CD4-positive, alpha-beta memory T cell (primary cell): ENCODE measurements at regions of chr6 and their contacts with region 1.

Region 1: DNA sequence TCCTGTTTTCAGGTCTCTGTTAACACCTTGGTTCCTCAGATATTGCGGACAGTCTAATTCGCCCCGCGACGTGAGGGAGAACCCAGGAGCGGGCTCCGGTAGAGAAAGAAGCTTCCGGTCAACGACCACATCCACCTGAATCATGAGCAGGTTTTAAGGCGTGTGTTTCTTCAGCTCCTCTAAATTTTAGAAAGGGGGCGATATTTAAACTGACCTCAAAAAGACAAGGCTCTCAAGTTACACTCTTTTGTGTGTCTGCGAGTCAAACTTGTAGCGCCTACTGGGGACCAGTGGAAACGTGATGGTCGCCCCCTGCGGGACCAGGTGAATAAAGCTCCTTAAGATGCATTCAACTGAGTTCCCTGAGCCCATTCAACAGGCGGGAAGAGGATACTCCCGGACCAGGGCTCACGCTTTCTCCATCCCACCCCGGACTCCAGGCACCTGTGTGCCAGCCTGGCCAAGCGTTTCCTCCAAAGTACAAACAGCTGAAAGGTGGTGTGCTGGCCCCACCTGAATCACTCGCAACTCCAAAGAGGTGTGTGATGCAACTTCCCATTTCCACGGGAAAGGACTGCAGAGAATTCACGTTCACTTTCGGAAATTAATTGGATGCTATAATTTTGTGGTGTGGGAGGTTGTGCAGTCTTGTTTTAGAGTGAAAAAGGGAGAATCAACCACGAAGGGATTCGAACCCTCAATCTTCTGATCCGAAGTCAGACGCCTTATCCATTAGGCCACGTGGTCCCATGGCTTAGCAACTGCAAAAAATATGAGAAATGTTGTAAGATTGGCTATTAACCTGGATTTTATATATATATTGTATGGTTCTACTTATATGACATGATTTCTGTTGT is 17.0 kb downstream of the GPX5 start:
- DNase-seq: peak; percentile 56 to 66 (median 62)
- H3K4me3 ChIP-seq: peak overlapping the region; percentile 33 to 57
- H3K4me3 Mint-ChIP-seq: peak overlapping the region; percentile 82 to 91 (median 88)
- H3K27ac ChIP-seq: no peak overlapping the region
- H3K27ac Mint-ChIP-seq: peak overlapping the region; percentile 38 to 95 (median 72)
- H3K4me1 ChIP-seq: peaks cover 20% of the 10 kb centered on the region
- H3K4me1 Mint-ChIP-seq: peaks cover 14 to 36% (median 23%) of the 10 kb centered on the region in 4 donors
- H3K27me3 ChIP-seq: no peaks in the 10 kb centered on the region
- H3K27me3 Mint-ChIP-seq: peaks cover 39 to 40% of the 10 kb centered on the region in 2 donors

Region 2: GRCh38 chr6:28496099-28496779 is 46.4 kb before region 1 on chr6:
- CTCF ChIA-PET with region 1: interaction called, 4 read pairs
- POLR2A ChIA-PET with region 1: no interaction called
- intact Hi-C with region 1: loop called (anchors 5 kb)
- DNase-seq: peak in 2 of 5 donors; percentile 11 to 14
- H3K4me3 ChIP-seq: no peak overlapping the region
- H3K4me3 Mint-ChIP-seq: no peak overlapping the region
- H3K27ac ChIP-seq: no peak overlapping the region
- H3K27ac Mint-ChIP-seq: no peak overlapping the region
- H3K4me1 ChIP-seq: no peaks in the 10 kb centered on the region
- H3K4me1 Mint-ChIP-seq: no peaks in the 10 kb centered on the region
- H3K27me3 ChIP-seq: no peaks in the 10 kb centered on the region
- H3K27me3 Mint-ChIP-seq: peaks cover 14 to 26% of the 10 kb centered on the region in 2 donors

Region 3: DNA sequence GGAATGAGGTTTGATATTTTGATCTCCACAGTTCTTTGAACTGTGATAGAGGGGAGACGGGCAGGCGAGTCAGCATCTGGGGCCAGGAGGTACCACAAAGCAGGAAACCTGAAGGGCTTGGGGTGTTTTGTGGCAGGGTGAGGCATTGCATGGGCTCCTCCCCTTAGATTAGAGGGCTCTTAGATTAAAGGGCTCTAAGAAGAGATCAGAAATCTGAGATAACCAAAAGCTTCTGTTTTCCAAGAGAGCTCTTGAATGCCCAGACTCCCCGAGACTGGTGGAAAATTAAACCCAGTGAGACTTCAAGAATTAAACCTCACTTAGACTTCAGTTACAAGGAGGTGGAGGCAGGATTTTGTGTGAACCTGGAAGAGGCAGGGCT is 19.4 kb before region 1 on chr6:
- CTCF ChIA-PET with region 1: interaction called, 3 read pairs
- POLR2A ChIA-PET with region 1: interaction called, 3 read pairs
- intact Hi-C with region 1: loop called (anchors 2 kb)
- DNase-seq: peak; percentile 34 to 69 (median 43)
- H3K4me3 ChIP-seq: no peak overlapping the region
- H3K4me3 Mint-ChIP-seq: peak overlapping the region in 7 of 8 donors; percentile 52 to 75 (median 61)
- H3K27ac ChIP-seq: no peak overlapping the region
- H3K27ac Mint-ChIP-seq: peak overlapping the region in 4 of 7 donors; percentile 10 to 67 (median 34)
- H3K4me1 ChIP-seq: peaks cover 26% of the 10 kb centered on the region
- H3K4me1 Mint-ChIP-seq: peaks cover 15 to 29% (median 24%) of the 10 kb centered on the region in 4 donors
- H3K27me3 ChIP-seq: no peaks in the 10 kb centered on the region
- H3K27me3 Mint-ChIP-seq: peaks cover 13 to 26% of the 10 kb centered on the region in 2 donors

Region 4: GRCh38 chr6:28586962-28587745 is 44.5 kb after region 1 on chr6:
- CTCF ChIA-PET with region 1: no interaction called
- POLR2A ChIA-PET with region 1: no interaction called
- intact Hi-C with region 1: no loop called
- DNase-seq: peak; percentile 40 to 52 (median 43)
- H3K4me3 ChIP-seq: peak overlapping the region; percentile 48 to 54
- H3K4me3 Mint-ChIP-seq: peak overlapping the region; percentile 82 to 91 (median 86)
- H3K27ac ChIP-seq: no peak overlapping the region
- H3K27ac Mint-ChIP-seq: peak overlapping the region in 1 of 7 donors; percentile 33
- H3K4me1 ChIP-seq: peaks cover 18% of the 10 kb centered on the region
- H3K4me1 Mint-ChIP-seq: peaks cover 15 to 41% (median 22%) of the 10 kb centered on the region in 4 donors
- H3K27me3 ChIP-seq: peaks cover 38% of the 10 kb centered on the region
- H3K27me3 Mint-ChIP-seq: peaks cover 61 to 72% of the 10 kb centered on the region in 2 donors